ENCODE measurements at regions of chr10 and their contacts with region 1.

Region 1: GRCh38 chr10:46030091-46030937 is at the start of gene NCOA4:
- DNase-seq: peak; percentile 85
- ATAC-seq: peak; percentile 98
- H3K4me3 Mint-ChIP-seq: peak within 1 kb of the TSS; percentile 95
- H3K27ac Mint-ChIP-seq: peak within 1 kb of the TSS; percentile 89
- H3K4me1 Mint-ChIP-seq: peaks cover 46% of the 10 kb centered on the region
- H3K27me3 Mint-ChIP-seq: no peaks in the 10 kb centered on the region
- CTCF ChIP-seq: no peak
- total RNA-seq, gene NCOA4: 94.5 and 94.9 TPM in 2 replicates

Region 2: DNA sequence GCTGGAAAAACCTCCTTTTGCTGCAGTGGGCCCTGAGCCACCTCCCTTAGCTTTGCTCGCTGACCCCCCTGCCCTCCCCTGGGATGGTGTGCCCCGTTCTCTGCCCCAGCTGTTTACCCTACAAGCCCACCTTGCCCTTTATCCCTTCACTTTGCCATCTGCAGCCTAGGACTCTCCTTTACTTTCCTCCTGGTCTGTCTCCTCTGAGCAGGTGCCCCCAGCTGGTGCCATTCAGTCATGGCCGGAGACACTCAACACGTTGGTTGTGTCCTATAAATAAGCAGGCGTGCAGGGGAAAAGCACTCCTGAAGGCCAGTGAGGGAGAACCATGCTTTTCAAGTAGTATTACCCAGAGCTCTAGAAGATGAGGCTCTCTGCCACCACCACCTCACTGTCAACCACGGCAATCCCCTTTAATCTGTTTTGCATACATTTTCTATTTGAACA is 1064.6 kb before region 1 on chr10:
- CTCF ChIA-PET with region 1: no interaction called
- POLR2A ChIA-PET with region 1: no interaction called
- intact Hi-C with region 1: loop called (anchors 5 kb)
- DNase-seq: no peak
- ATAC-seq: peak; percentile 29
- H3K4me3 Mint-ChIP-seq: peak overlapping the region; percentile 42
- H3K27ac Mint-ChIP-seq: peak overlapping the region; percentile 57
- H3K4me1 Mint-ChIP-seq: peaks cover 71% of the 10 kb centered on the region
- H3K27me3 Mint-ChIP-seq: no peaks in the 10 kb centered on the region
- CTCF ChIP-seq: no peak

Region 3: DNA sequence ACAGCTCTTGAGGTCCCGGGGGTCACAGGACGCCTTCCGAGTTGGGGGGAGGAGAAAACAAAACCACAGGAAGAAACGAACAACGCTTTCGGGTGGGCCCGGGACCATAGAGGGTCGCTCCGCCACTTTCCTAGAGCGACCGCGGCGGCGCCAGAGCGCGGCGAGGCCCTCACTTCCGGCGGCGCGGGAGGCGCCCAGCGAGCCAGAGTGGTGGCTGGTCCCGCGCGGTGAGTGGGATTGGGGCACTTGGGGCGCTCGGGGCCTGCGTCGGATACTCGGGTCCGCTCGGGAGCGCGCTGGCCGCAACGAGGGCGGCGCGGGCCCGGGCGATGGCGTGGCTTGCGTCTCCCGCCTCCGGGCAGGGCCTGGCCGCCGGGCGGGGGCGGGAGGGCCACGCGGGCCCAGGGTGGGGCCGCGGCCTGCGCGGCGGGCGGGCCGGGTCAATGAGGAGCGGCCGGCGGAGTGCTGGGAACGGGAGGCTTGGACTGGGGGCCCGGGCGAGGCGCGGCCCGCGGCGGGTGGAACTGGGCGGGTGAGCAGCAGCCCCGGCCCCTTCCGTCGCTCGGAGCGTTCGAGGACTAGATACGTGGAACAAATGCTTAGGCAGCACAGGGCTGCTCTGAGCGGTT is 1029.4 kb before region 1 on chr10 and contains the start of gene ZNF22:
- CTCF ChIA-PET with region 1: no interaction called
- POLR2A ChIA-PET with region 1: no interaction called
- intact Hi-C with region 1: loop called (anchors 5 kb)
- DNase-seq: peak; percentile 76
- ATAC-seq: peak; percentile 82
- H3K4me3 Mint-ChIP-seq: peak within 1 kb of the TSS; percentile 90
- H3K27ac Mint-ChIP-seq: peak within 1 kb of the TSS; percentile 93
- H3K4me1 Mint-ChIP-seq: peaks cover 25% of the 10 kb centered on the region
- H3K27me3 Mint-ChIP-seq: no peaks in the 10 kb centered on the region
- CTCF ChIP-seq: no peak
- total RNA-seq, gene ZNF22: 34.2 and 37.5 TPM in 2 replicates

Region 4: GRCh38 chr10:45235798-45236231 is 794.5 kb before region 1 on chr10:
- CTCF ChIA-PET with region 1: interaction called, 3 read pairs
- POLR2A ChIA-PET with region 1: no interaction called
- intact Hi-C with region 1: loop called (anchors 1 kb)
- DNase-seq: no peak
- ATAC-seq: no peak
- H3K4me3 Mint-ChIP-seq: no peak overlapping the region
- H3K27ac Mint-ChIP-seq: no peak overlapping the region
- H3K4me1 Mint-ChIP-seq: no peaks in the 10 kb centered on the region
- H3K27me3 Mint-ChIP-seq: peaks cover 3% of the 10 kb centered on the region
- CTCF ChIP-seq: no peak

Region 5: GRCh38 chr10:45249978-45250693 is 780.2 kb before region 1 on chr10:
- CTCF ChIA-PET with region 1: interaction called, 3 read pairs
- POLR2A ChIA-PET with region 1: interaction called, 9 read pairs
- intact Hi-C with region 1: loop called (anchors 2 kb)
- DNase-seq: peak; percentile 42
- ATAC-seq: peak; percentile 84
- H3K4me3 Mint-ChIP-seq: peak overlapping the region; percentile 85
- H3K27ac Mint-ChIP-seq: peak overlapping the region; percentile 91
- H3K4me1 Mint-ChIP-seq: peaks cover 26% of the 10 kb centered on the region
- H3K27me3 Mint-ChIP-seq: peaks cover 2% of the 10 kb centered on the region
- CTCF ChIP-seq: peak; percentile 81

Region 6: GRCh38 chr10:46106410-46107255 is 76.3 kb after region 1 on chr10:
- CTCF ChIA-PET with region 1: no interaction called
- POLR2A ChIA-PET with region 1: no interaction called
- intact Hi-C with region 1: loop called (anchors 2 kb)
- DNase-seq: peak; percentile 51
- ATAC-seq: peak; percentile 87
- H3K4me3 Mint-ChIP-seq: peak overlapping the region; percentile 84
- H3K27ac Mint-ChIP-seq: no peak overlapping the region
- H3K4me1 Mint-ChIP-seq: peaks cover 12% of the 10 kb centered on the region
- H3K27me3 Mint-ChIP-seq: peaks cover 11% of the 10 kb centered on the region
- CTCF ChIP-seq: no peak

Region 7: DNA sequence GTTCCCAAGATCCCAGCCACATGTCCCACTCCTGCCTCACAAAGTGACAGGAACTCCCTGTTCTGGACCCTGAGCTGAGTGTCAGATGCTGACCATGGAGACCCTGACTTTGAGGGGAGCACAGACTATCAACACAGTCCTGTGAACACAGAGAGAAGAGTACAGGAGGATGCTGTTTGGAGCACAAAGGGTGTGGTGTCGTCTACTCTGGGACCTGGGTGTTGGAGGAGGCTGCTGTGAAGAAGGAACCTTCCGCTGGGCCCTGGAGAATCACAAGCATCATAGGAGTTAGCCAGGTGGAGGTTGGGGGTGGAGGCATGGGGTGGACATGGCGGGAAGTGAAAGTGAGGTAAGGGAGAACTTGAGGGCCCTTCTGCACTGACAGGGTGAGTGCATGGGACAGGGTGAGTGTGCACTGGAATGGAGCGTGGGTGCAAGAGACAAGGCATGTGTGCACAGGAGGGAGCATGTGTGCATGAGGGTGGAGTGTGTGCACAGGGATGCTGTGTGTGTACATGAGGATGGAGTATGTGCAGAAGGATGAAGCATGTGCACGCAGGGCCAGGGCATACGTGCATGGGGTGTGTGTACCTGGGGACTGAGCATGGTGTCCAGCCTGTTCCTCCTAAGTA is 185.8 kb after region 1 on chr10:
- CTCF ChIA-PET with region 1: no interaction called
- POLR2A ChIA-PET with region 1: no interaction called
- intact Hi-C with region 1: no loop called
- DNase-seq: no peak
- ATAC-seq: no peak
- H3K4me3 Mint-ChIP-seq: no peak overlapping the region
- H3K27ac Mint-ChIP-seq: no peak overlapping the region
- H3K4me1 Mint-ChIP-seq: no peaks in the 10 kb centered on the region
- H3K27me3 Mint-ChIP-seq: peaks cover 1% of the 10 kb centered on the region
- CTCF ChIP-seq: no peak

Region 8: GRCh38 chr10:46284293-46285229 is 254.2 kb after region 1 on chr10:
- CTCF ChIA-PET with region 1: no interaction called
- POLR2A ChIA-PET with region 1: no interaction called
- intact Hi-C with region 1: loop called (anchors 10 kb)
- DNase-seq: peak; percentile 84
- ATAC-seq: peak; percentile 90
- H3K4me3 Mint-ChIP-seq: peak overlapping the region; percentile 80
- H3K27ac Mint-ChIP-seq: no peak overlapping the region
- H3K4me1 Mint-ChIP-seq: peaks cover 16% of the 10 kb centered on the region
- H3K27me3 Mint-ChIP-seq: peaks cover 41% of the 10 kb centered on the region
- CTCF ChIP-seq: no peak

Measured in activated B cell treated with CpG ODN at 0.5 μM for 24 hours (primary cell).